SK-N-SH (cell line): ENCODE measurements at regions of chr10 and their contacts with region 1.

Region 1: DNA sequence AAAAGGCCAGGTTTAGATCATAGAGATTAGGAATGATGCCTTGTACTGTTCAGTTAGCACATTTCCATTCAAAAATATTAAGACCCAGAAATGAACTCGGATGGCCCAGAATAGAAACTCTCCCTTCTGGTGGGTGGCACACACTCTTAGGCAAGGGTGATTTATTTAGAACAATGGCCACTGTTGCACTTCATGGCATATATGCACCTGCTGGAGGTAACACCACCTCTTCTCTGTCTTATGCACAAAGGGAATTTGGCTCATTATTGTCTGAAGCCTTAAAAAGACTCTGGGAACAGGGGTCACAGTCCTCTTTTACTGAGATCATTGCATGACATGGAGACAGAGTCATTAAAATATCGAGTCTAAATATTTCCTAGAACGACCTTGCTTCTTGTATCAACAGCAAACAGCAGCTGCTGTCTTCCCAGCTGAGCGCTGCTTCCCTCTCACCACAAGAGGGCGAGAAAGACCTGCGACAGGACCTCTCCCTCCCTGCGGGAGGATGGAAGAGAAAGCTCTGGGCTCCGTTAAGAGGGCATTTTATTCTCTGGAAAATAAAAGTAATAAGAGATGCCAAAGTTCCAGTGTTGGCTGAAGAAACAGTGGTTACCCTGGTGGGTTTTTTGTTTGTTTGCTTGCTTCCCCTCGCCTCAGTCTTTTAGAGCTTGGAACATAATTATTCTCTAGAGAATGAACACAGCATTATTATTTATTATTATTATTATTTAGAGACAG is 13.6 kb upstream of the BAMBI start:
- DNase-seq: peak; percentile 82
- H3K4me3 ChIP-seq: no peak overlapping the region; a peak in 1 of 4 replicates
- H3K27ac ChIP-seq: no peak overlapping the region
- H3K4me1 ChIP-seq: no peaks in the 10 kb centered on the region
- H3K27me3 ChIP-seq: 0 out of 2 replicates have a peak, but pooled peaks cover 9% of the 10 kb centered on the region
- CTCF ChIP-seq: peak; percentile 99
- EP300 ChIP-seq: no peak
- RAD21 ChIP-seq: peak; percentile 100

Region 2: GRCh38 chr10:28492116-28492920 is 171.4 kb before region 1 on chr10:
- CTCF ChIA-PET with region 1: no interaction called
- POLR2A ChIA-PET with region 1: no interaction called
- DNase-seq: peak; percentile 26
- H3K4me3 ChIP-seq: no peak overlapping the region
- H3K27ac ChIP-seq: peak overlapping the region in 1 of 2 experiments; percentile 36; a peak in 2 of 4 replicates
- H3K4me1 ChIP-seq: peaks cover 0 to 2% of the 10 kb centered on the region in 2 experiments; a peak in 2 of 4 replicates
- H3K27me3 ChIP-seq: no peaks in the 10 kb centered on the region
- CTCF ChIP-seq: no peak
- EP300 ChIP-seq: no peak
- RAD21 ChIP-seq: no peak

Region 3: DNA sequence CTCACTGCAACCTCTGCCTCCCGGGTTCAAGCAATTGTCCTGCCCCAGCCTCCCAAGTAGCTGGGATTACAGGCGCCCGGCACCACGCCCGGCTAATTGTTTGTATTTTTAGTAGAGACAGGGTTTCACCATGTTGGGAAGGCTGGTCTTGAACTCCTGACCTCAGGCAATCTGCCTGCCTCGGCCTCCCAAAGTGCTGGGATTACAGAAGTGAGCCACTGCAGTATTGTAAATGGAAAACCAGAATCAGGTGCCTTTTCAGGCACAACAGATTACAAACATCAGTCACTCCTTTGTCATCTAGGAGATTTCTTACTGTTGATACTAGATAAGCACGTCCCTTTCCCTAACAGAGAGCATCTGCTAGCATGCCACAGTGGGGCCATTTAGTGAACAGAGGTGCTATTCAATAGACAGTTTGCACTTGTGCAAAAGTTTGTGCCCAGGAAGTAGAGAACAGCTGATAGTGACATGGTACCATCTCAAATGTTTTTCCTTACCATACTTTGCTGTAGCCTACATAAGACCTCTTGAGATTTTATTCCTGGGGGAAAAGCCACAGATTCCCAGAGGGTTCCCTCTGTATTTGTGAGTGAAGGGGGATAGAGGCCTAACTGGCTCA is 155.3 kb before region 1 on chr10:
- CTCF ChIA-PET with region 1: no interaction called
- POLR2A ChIA-PET with region 1: no interaction called
- DNase-seq: no peak
- H3K4me3 ChIP-seq: no peak overlapping the region
- H3K27ac ChIP-seq: no peak overlapping the region
- H3K4me1 ChIP-seq: peaks cover 0 to 7% of the 10 kb centered on the region in 2 experiments; a peak in 2 of 4 replicates
- H3K27me3 ChIP-seq: no peaks in the 10 kb centered on the region
- CTCF ChIP-seq: no peak
- EP300 ChIP-seq: no peak
- RAD21 ChIP-seq: no peak

Region 4: GRCh38 chr10:28569506-28570159 is 94.1 kb before region 1 on chr10:
- CTCF ChIA-PET with region 1: no interaction called
- POLR2A ChIA-PET with region 1: no interaction called
- DNase-seq: no peak
- H3K4me3 ChIP-seq: no peak overlapping the region
- H3K27ac ChIP-seq: peak overlapping the region; percentile 10 to 30; a peak in 2 of 4 replicates
- H3K4me1 ChIP-seq: peaks cover 4 to 6% of the 10 kb centered on the region in 2 experiments; a peak in 2 of 4 replicates
- H3K27me3 ChIP-seq: no peaks in the 10 kb centered on the region
- CTCF ChIP-seq: no peak
- EP300 ChIP-seq: no peak
- RAD21 ChIP-seq: no peak

Region 5: DNA sequence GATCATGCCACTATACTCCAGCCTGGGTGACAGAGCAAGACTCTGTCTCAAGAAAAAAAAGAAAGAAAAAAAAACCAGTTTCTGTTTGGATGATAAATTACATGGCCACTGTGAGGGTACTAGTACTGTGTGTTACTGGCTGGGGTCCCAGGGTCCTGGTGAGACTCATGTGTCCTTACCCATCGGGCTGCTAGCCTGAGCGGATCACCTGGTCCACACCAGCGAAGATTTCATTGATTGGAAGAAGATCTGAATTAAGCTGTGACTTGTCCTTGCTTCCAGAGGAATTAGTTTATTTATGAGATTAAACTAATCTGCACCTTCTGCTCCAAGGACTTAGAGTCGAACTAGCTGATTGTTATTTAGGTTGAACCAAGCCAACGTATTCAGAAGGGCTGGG is 26.4 kb before region 1 on chr10:
- CTCF ChIA-PET with region 1: interaction called, 18 read pairs
- POLR2A ChIA-PET with region 1: no interaction called
- DNase-seq: no peak
- H3K4me3 ChIP-seq: no peak overlapping the region
- H3K27ac ChIP-seq: no peak overlapping the region
- H3K4me1 ChIP-seq: no peaks in the 10 kb centered on the region
- H3K27me3 ChIP-seq: no peaks in the 10 kb centered on the region; the same call in 1 of the 2 replicates
- CTCF ChIP-seq: no peak
- EP300 ChIP-seq: no peak
- RAD21 ChIP-seq: no peak

Region 6: GRCh38 chr10:28676968-28677887 is 13.5 kb after region 1 on chr10 and contains the start of gene BAMBI:
- CTCF ChIA-PET with region 1: interaction called, 34 read pairs
- POLR2A ChIA-PET with region 1: no interaction called
- DNase-seq: peak; percentile 95
- H3K4me3 ChIP-seq: peak within 1 kb of the TSS; percentile 82 to 87
- H3K27ac ChIP-seq: peak within 1 kb of the TSS in 1 of 2 experiments; percentile 92; a peak in 2 of 4 replicates
- H3K4me1 ChIP-seq: peaks cover 11 to 21% of the 10 kb centered on the region in 2 experiments; a peak in 3 of 4 replicates
- H3K27me3 ChIP-seq: peaks cover 18% of the 10 kb centered on the region; the same call in 1 of the 2 replicates
- CTCF ChIP-seq: peak; percentile 59
- EP300 ChIP-seq: 0 out of 4 replicates have a peak, but pooled peaks of 1 of the 2 experiments have one; percentile 15
- RAD21 ChIP-seq: peak; percentile 69
- polyA plus RNA-seq, gene BAMBI: 2.8 and 2.9 TPM in 2 replicates

Region 7: DNA sequence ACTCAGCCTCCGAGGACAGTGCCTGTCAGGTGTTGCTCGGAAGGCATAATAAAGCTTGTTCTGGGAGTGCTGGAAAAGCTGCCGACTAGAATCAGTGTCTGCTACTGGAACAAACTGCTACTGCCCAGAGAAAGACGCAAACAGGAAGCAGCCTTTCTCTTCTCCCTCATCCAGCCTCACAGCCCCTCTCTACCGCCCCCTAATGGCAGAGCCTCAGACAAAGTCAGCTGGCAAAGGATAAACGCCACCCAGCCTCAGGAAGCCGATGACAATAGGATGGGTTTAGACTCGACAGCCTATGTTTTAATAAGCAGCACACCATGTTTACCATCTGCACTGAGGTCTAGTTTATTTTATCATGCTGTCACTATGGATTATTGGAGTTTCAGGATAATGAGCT is 455.6 kb after region 1 on chr10:
- CTCF ChIA-PET with region 1: interaction called, 119 read pairs
- POLR2A ChIA-PET with region 1: no interaction called
- DNase-seq: no peak
- H3K4me3 ChIP-seq: no peak overlapping the region
- H3K27ac ChIP-seq: no peak overlapping the region
- H3K4me1 ChIP-seq: peaks cover 4 to 6% of the 10 kb centered on the region in 2 experiments; a peak in 3 of 4 replicates
- H3K27me3 ChIP-seq: no peaks in the 10 kb centered on the region
- CTCF ChIP-seq: peak; percentile 28; the same call in 1 of the 2 replicates
- EP300 ChIP-seq: no peak
- RAD21 ChIP-seq: no peak

Region 8: DNA sequence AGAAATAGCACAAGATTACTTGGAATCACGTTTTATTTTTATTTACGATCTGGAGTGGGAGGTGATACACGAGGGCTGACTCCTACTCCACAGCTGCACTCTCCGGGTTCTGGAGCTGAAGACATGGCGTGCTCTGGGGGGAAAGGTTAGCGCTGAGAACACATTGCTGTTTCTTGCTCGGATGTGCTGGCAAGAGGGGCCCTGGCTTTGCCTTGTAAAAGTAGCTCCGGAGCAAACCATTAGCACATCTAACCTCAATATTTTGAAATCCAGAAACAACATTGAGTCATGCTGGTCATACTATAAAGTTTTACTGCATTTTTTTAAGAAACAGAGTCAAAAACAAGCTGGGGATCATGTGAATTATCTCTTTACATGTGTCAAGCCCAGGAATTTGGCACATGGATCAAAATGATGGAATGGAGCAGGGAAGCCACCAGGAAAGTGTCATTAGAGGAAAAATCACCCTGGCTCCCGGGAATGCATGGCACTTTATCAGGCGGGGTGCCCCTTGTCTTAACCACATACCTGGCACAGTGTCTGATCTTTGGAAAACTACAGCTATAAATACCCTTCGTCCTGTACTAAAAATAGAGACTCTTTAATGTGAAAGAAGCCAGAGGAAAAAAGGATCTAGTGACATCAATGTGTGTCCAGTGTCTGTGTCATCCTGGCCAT is 593.5 kb after region 1 on chr10:
- CTCF ChIA-PET with region 1: interaction called, 15 read pairs
- POLR2A ChIA-PET with region 1: no interaction called
- DNase-seq: no peak
- H3K4me3 ChIP-seq: no peak overlapping the region
- H3K27ac ChIP-seq: peak overlapping the region in 1 of 2 experiments; percentile 93; a peak in 2 of 4 replicates
- H3K4me1 ChIP-seq: peaks cover 27 to 46% of the 10 kb centered on the region in 2 experiments
- H3K27me3 ChIP-seq: peaks cover 5% of the 10 kb centered on the region; the same call in 1 of the 2 replicates
- CTCF ChIP-seq: no peak
- EP300 ChIP-seq: no peak
- RAD21 ChIP-seq: no peak

Region 9: GRCh38 chr10:29386342-29386999 is 722.7 kb after region 1 on chr10:
- CTCF ChIA-PET with region 1: interaction called, 10 read pairs
- POLR2A ChIA-PET with region 1: no interaction called
- DNase-seq: peak; percentile 56
- H3K4me3 ChIP-seq: peak overlapping the region in 1 of 2 experiments; percentile 18; a peak in 1 of 4 replicates
- H3K27ac ChIP-seq: no peak overlapping the region
- H3K4me1 ChIP-seq: no peaks in the 10 kb centered on the region; a peak in 1 of 4 replicates
- H3K27me3 ChIP-seq: peaks cover 9% of the 10 kb centered on the region
- CTCF ChIP-seq: peak; percentile 82
- EP300 ChIP-seq: no peak
- RAD21 ChIP-seq: peak; percentile 57